PC-3 (cell line): ENCODE measurements at regions of chr10 and their contacts with region 1.

Region 1: GRCh38 chr10:28089467-28089866 is 90.6 kb upstream of the ODAD2 start:
- DNase-seq: peak; percentile 81
- ATAC-seq: peak; percentile 88
- H3K4me3 ChIP-seq: peak overlapping the region; percentile 32; the same call in 1 of the 2 replicates
- H3K27ac ChIP-seq: peak overlapping the region; percentile 80
- H3K4me1 ChIP-seq: peaks cover 20% of the 10 kb centered on the region
- H3K27me3 ChIP-seq: no peaks in the 10 kb centered on the region
- CTCF ChIP-seq: no peak

Region 2: GRCh38 chr10:28111712-28112111 is 22.2 kb after region 1 on chr10:
- CTCF ChIA-PET with region 1: no interaction called
- POLR2A ChIA-PET with region 1: no interaction called
- intact Hi-C with region 1: loop called (anchors 1 kb)
- DNase-seq: peak; percentile 66
- ATAC-seq: peak; percentile 91
- H3K4me3 ChIP-seq: no peak overlapping the region
- H3K27ac ChIP-seq: peak overlapping the region; percentile 4; the same call in 1 of the 2 replicates
- H3K4me1 ChIP-seq: peaks cover 15% of the 10 kb centered on the region
- H3K27me3 ChIP-seq: no peaks in the 10 kb centered on the region
- CTCF ChIP-seq: no peak